HCT116 (cell line): ENCODE measurements at regions of chr20 and their contacts with region 1.

Region 1: GRCh38 chr20:21125849-21126580 is at the start of gene KIZ:
- DNase-seq: peak; percentile 84
- ATAC-seq: peak; percentile 95
- H3K4me3 ChIP-seq: peak within 1 kb of the TSS; percentile 66 to 94
- H3K27ac ChIP-seq: peak within 1 kb of the TSS; percentile 66
- H3K4me1 ChIP-seq: peaks cover 7 to 17% of the 10 kb centered on the region in 2 experiments; a peak in 3 of 4 replicates
- H3K27me3 ChIP-seq: no peaks in the 10 kb centered on the region
- CTCF ChIP-seq: peak in 2 of 3 experiments; percentile 26 to 38; a peak in 3 of 6 replicates
- POLR2A ChIP-seq: peak; percentile 68
- RAD21 ChIP-seq: 0 out of 2 replicates have a peak, but pooled peaks have one; percentile 17
- total RNA-seq, gene KIZ: 17.6 TPM

Region 2: DNA sequence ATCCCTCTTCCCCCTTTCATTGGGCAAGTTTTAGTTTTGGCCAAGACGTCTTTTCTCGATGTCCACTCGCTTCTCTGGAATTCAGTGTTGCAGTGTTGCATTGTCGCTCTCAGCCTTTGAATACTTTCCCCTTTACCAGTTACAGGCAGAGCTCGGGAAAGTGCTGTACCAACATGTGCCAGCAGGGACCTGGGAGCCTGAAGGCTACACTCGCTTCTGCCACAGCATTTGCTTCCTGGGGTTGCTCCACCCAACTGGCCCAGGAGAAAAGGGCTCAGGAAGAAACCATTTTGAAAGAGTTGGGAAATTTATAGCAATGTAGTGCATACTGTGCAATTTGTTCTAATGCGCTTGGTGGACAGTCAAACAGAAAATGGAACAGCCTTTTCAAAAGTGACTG is 98.4 kb before region 1 on chr20:
- CTCF ChIA-PET with region 1: no interaction called
- POLR2A ChIA-PET with region 1: no interaction called
- RAD21 ChIA-PET with region 1: no interaction called
- intact Hi-C with region 1: loop called (anchors 1 kb)
- DNase-seq: peak; percentile 54
- ATAC-seq: peak; percentile 100
- H3K4me3 ChIP-seq: no peak overlapping the region
- H3K27ac ChIP-seq: no peak overlapping the region
- H3K4me1 ChIP-seq: peaks cover 0 to 8% of the 10 kb centered on the region in 2 experiments; a peak in 2 of 4 replicates
- H3K27me3 ChIP-seq: no peaks in the 10 kb centered on the region
- CTCF ChIP-seq: peak in 2 of 3 experiments; percentile 52 to 64; a peak in 4 of 6 replicates
- POLR2A ChIP-seq: no peak
- RAD21 ChIP-seq: peak; percentile 9

Region 3: GRCh38 chr20:21063276-21063675 is 62.7 kb before region 1 on chr20:
- CTCF ChIA-PET with region 1: no interaction called
- POLR2A ChIA-PET with region 1: no interaction called
- RAD21 ChIA-PET with region 1: no interaction called
- intact Hi-C with region 1: no loop called
- DNase-seq: no peak
- ATAC-seq: no peak
- H3K4me3 ChIP-seq: no peak overlapping the region
- H3K27ac ChIP-seq: no peak overlapping the region
- H3K4me1 ChIP-seq: no peaks in the 10 kb centered on the region
- H3K27me3 ChIP-seq: no peaks in the 10 kb centered on the region
- CTCF ChIP-seq: no peak
- POLR2A ChIP-seq: no peak
- RAD21 ChIP-seq: no peak

Region 4: DNA sequence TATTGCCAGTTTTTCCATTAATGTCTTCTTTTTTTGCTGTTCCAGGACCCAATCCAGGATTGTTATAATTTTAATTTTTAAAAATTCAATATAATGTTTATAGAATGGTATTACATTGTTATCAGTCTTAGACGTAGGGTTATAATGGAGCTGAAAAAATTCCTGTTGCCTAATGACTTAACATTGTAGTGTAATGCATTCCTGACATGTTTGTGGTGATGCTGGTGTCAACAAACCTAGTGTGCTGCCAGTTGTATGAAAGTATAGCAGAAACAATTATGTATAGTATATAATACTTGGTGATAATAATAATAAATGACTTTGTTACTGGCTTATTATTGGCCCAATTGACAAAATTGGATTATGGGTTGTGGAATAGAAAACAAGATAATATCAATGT is 30.3 kb after region 1 on chr20:
- CTCF ChIA-PET with region 1: no interaction called
- POLR2A ChIA-PET with region 1: no interaction called
- RAD21 ChIA-PET with region 1: no interaction called
- intact Hi-C with region 1: no loop called
- DNase-seq: no peak
- ATAC-seq: no peak
- H3K4me3 ChIP-seq: no peak overlapping the region
- H3K27ac ChIP-seq: no peak overlapping the region
- H3K4me1 ChIP-seq: no peaks in the 10 kb centered on the region
- H3K27me3 ChIP-seq: no peaks in the 10 kb centered on the region
- CTCF ChIP-seq: no peak
- POLR2A ChIP-seq: no peak
- RAD21 ChIP-seq: no peak